Colonic mucosa (tissue), 4 donors: ENCODE measurements at regions of chr4 and their contacts with region 1.

Region 1: DNA sequence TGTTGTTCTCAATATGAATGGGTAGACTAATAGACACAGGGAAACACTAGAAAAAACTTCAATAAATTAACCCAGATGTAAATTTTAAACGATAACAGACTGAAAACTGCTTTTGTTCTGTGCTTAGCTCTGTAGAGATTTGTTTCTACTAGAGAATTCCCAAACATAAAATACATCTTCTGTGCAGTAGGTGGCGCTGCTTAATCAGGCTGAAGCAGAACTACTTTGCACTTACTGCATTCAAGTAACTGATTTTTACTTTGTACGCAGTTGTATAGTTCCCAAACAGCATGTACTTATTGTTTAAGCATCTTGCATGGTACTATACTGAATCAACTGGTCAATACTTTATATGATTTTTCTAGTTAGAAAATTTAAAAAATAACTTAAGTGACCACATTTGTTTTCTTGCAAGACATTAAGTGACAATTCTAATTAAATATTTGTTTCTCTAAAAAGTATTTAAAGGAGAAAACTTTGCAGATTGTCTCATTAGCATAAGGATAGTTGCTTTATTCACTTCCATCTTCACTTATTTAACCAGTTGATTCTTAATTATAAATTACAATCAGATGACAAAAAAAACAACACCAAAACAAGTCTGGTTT is 490.6 kb downstream of the IL15 start:
- DNase-seq: peak; percentile 64
- H3K4me3 ChIP-seq: no peak overlapping the region
- H3K27ac ChIP-seq: no peak overlapping the region
- H3K4me1 ChIP-seq: no peaks in the 10 kb centered on the region
- H3K27me3 ChIP-seq: no peaks in the 10 kb centered on the region
- CTCF ChIP-seq: peak; percentile 79

Region 2: GRCh38 chr4:142077048-142077447 is 49.9 kb before region 1 on chr4:
- intact Hi-C with region 1: no loop called
- DNase-seq: no peak
- H3K4me3 ChIP-seq: no peak overlapping the region
- H3K27ac ChIP-seq: no peak overlapping the region
- H3K4me1 ChIP-seq: no peaks in the 10 kb centered on the region
- H3K27me3 ChIP-seq: no peaks in the 10 kb centered on the region
- CTCF ChIP-seq: no peak

Region 3: DNA sequence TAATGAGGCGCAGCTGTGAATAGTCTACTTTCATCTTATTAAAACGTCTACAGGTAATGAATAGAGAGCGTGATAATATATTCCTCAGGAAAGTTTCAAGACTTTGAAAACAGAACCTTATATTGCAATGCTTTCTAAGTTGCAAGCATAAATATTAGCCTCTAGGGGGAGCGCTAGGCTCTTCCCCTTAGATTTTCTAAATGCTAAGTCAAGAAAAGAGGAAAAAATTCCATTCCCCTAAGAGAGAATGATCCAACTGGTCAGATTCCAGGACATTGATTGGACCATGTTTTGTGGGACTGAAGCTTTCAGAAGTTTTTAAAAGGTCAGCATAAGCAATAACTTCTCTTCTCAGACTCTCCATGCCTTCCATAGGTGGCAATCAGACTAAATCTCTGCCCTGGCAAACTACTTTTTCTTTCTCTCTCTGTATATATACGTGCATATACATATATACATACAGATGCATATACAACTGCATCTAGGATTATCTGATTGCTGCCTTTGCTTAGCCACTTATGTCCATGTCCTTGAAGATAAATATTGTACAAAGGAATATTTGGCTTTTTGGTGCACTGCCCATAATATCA is 226.2 kb after region 1 on chr4:
- intact Hi-C with region 1: loop called (anchors 10 kb)
- DNase-seq: no peak
- H3K4me3 ChIP-seq: no peak overlapping the region
- H3K27ac ChIP-seq: no peak overlapping the region
- H3K4me1 ChIP-seq: no peaks in the 10 kb centered on the region
- H3K27me3 ChIP-seq: no peaks in the 10 kb centered on the region
- CTCF ChIP-seq: peak; percentile 93

Region 4: DNA sequence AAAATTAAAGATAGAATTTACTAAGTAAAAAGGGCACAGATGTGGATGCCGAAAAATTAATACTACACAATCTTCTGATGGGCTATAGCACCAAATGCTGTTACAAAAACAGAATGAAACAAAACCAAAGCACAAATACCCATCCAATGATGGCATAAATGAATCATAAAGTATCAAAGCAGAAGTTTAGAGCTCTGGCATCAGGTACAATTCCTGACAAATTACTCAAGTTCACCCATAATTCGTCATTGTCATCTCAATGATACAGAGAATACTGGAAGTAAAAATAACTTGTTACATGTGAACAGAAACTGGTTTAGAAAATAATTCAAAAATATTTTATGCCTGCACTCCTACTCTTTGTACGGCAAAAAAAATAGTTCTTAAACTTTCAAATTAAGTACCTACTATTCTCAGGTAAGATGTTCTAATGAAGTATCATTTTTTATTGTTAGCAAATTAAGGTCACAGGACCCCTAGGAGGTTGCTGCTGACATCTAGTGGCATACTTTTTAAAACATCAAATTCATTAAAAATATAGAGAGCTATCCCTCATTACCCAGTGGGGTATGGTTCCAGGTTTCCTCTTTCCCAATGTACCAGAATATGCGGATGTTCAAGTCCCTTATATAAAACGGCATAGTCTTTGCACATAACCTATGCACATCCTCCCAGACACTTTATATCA is 593.0 kb after region 1 on chr4:
- intact Hi-C with region 1: loop called (anchors 5 kb)
- DNase-seq: no peak
- H3K4me3 ChIP-seq: no peak overlapping the region
- H3K27ac ChIP-seq: no peak overlapping the region
- H3K4me1 ChIP-seq: no peaks in the 10 kb centered on the region
- H3K27me3 ChIP-seq: no peaks in the 10 kb centered on the region
- CTCF ChIP-seq: peak; percentile 26

Region 5: DNA sequence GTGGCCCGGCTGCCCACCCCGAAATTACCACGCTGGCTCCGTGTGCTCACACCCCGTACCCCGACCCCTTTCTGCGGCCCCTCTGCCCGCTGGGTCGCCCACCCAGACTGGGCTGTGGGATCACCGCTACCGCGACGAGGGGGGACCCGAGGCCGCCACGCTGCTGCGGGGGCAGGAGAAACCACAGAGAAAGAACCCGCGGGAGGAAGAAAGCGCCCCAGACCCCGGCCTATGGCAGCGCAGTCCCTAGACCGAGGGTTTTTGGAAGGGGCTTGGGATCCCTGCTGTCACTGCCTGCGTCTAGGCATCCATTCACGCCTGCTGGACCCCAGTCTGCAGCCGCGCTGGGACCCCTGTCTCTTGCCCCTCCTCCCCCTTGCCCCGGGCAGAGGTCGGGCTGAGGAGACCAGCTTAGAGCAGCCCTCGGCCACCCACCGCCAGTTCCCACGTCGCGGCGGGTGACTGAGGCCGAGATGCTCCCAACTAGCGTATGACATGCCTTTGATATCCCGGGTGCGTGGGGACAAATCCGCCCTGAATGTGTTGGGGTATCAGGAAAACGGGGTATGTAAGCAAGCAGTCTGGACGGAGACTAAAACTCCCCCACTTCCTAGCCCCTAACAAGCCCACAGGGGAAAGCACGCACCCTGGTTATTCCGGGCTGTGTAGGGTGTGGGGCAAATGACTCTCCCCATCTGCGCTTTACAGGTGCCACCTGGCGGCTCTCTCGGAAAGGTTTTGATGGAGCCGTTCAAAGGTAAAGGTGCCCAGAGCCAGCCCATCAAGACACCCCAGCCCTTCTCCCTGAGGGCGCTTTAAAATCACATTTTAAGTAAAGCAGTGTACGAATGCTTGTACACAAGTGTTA is 720.0 kb after region 1 on chr4:
- intact Hi-C with region 1: loop called (anchors 5 kb)
- DNase-seq: peak; percentile 78
- H3K4me3 ChIP-seq: peak overlapping the region; percentile 60
- H3K27ac ChIP-seq: no peak overlapping the region
- H3K4me1 ChIP-seq: no peaks in the 10 kb centered on the region
- H3K27me3 ChIP-seq: no peaks in the 10 kb centered on the region
- CTCF ChIP-seq: peak; percentile 36